Right ventricle myocardium inferior (tissue), 1 donor: ENCODE measurements at regions of chr9 and their contacts with region 1.

Region 1: DNA sequence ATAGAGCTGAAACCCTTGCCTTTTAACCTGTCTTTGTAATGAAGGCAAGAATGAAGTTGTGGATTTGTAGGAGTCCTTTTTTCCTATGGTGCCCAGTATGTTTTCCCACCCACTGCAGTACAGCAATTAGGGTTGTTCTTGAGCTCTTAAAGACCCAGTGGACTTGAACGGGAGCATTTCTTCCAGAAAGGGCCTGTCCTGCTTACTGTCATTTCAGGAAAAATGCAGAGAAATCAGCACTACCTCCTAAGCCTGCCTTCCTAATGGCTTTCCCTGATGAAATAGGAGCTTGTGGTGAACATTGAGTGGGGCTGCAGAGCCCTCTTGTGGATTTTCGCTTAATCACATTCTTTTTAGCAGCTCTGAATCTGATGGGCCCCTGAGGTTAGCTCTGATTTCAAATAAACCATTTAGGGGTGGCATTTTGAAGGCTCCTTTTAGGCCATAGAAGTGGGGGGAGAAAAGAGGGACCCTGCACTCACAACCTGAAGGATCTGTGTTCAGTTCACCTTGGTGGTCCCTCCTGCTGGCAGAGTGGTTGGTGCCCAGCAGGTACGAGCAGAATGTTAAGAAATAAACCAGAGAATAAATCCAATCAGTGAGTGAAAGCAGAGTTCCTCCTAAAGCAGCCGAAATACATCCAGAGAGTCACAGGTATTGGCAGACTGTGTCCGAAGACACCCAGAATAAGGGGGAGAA is 188.0 kb upstream of the KLF9 start:
- DNase-seq: no peak
- ATAC-seq: peak; percentile 59

Region 2: DNA sequence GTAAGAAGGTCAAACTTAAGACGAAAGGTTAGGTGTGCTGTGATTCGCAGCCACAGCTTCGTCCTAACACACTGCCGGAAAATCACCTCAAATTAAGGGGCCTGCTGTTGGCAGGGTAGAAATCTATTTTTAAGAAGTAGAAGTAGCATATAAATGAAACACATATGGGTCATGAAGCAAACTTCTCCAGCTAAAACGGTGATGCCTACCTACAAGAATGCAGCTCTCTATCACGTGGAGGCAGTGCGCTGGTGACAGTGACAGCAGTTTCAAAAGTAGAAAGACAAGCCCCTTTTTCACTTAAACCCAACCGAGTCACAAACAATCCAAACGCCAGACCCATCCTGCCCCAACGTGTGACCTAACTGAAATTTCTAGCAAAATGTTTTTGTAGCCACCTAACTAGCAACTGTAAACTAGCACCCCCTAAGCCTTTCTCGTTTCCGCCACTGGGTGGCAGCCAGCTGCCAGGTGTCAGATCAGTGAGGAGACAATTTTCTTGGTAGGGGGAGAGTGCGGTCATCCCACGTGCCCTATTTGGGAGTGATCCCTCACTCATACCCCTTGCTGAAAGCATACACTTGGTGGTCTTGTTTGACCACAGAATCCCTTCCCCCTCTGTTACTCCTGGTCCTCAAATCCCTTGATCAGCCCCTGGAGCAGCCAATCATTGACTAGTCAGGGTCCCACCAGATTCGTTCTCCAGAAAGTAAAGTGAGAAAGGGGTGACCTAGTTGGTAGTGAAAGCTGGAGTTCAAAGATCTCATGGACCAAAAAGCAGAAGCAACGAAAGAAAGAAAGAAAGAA is 630.6 kb before region 1 on chr9:
- intact Hi-C with region 1: loop called (anchors 10 kb)
- DNase-seq: peak; percentile 79
- ATAC-seq: peak; percentile 81

Region 3: GRCh38 chr9:70340572-70340971 is 261.9 kb before region 1 on chr9:
- intact Hi-C with region 1: loop called (anchors 1 kb)
- DNase-seq: no peak
- ATAC-seq: no peak

Region 4: DNA sequence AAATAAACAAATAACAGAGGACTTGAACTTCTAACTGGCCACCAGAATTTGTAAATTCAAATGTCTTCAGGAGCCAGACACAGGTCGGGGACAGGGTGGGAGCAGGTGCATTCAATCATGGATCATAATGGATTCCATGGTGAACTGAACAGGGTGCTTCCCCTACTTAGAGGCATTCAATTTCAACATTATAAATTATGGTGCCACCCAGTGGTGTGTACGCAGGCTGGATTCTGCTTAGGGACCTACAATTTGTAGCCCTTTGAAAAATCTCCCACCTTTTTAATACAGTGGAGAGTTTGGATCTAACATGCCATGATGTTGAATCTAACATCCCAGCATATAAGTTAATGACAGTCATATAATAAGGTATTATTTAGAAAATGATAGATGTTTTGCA is 210.3 kb before region 1 on chr9:
- intact Hi-C with region 1: loop called (anchors 5 kb)
- DNase-seq: no peak
- ATAC-seq: peak; percentile 45

Region 5: GRCh38 chr9:70418822-70419545 is 183.5 kb before region 1 on chr9:
- intact Hi-C with region 1: loop called (anchors 1 kb)
- DNase-seq: peak; percentile 99
- ATAC-seq: peak; percentile 69

Region 6: GRCh38 chr9:70574151-70574837 is 28.2 kb before region 1 on chr9:
- intact Hi-C with region 1: no loop called
- DNase-seq: peak; percentile 55
- ATAC-seq: peak; percentile 90